ENCODE measurements at regions of chr1 and their contacts with region 1.

Region 1: GRCh38 chr1:151327223-151327902 is at the start of gene PI4KB:
- DNase-seq: peak; percentile 100
- H3K4me3 Mint-ChIP-seq: peak within 1 kb of the TSS; percentile 89
- H3K27ac Mint-ChIP-seq: peak within 1 kb of the TSS; percentile 90
- H3K4me1 Mint-ChIP-seq: peaks cover 36% of the 10 kb centered on the region
- H3K27me3 Mint-ChIP-seq: no peaks in the 10 kb centered on the region
- CTCF ChIP-seq: no peak
- total RNA-seq, gene PI4KB: 75.3 and 90.1 TPM in 2 replicates

Region 2: GRCh38 chr1:151036363-151036762 is 291.0 kb before region 1 on chr1 and contains the start of gene BNIPL:
- CTCF ChIA-PET with region 1: no interaction called
- POLR2A ChIA-PET with region 1: no interaction called
- intact Hi-C with region 1: no loop called
- DNase-seq: no peak
- H3K4me3 Mint-ChIP-seq: no peak within 1 kb of the TSS
- H3K27ac Mint-ChIP-seq: no peak within 1 kb of the TSS
- H3K4me1 Mint-ChIP-seq: peaks cover 5% of the 10 kb centered on the region
- H3K27me3 Mint-ChIP-seq: no peaks in the 10 kb centered on the region
- CTCF ChIP-seq: no peak
- total RNA-seq, gene BNIPL: 1.2 and 2.3 TPM in 2 replicates

Region 3: DNA sequence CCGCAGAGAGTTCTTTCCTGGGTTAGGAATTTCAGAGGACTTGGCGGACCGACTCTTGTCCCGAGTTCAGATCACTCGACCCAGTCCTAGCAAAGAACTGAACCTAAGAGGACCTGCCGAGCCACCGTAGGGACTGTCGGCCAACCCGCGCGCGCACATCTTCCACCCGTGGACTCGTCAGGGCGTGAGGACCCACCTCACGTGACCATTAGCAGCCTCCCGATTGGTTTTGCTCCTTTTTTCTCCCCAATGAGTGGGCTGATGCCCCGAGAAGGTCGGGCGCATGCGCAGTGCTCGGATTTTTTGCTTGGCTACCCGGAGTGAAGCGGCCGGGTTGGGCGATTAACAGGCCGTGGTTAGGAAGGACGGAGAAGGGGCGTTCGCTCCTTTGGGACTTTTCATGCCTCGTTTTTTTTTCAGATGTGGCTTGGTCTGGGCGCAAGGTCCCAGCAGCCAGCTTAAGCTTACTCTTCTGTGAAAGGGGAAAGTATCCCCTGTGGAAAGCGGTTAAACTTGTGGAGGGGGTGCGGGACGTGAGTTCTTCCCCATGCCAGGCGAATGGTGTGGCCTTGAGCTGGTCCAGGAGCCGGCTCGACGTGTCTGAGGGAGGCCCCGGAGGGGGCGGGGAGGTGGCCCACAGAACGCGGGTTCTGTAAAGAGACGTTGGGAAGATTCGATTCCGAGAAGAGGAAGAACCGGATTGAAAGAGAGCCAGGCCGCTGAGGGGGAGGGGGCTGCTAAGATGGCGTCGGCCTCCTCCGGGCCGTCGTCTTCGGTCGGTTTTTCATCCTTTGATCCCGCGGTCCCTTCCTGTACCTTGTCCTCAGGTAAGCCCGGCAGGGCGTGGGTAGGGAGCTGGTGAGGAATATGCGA is 128.9 kb before region 1 on chr1 and contains the start of gene PIP5K1A:
- CTCF ChIA-PET with region 1: interaction called, 3 read pairs
- POLR2A ChIA-PET with region 1: interaction called, 27 read pairs
- intact Hi-C with region 1: loop called (anchors 5 kb)
- DNase-seq: peak; percentile 100
- H3K4me3 Mint-ChIP-seq: peak within 1 kb of the TSS; percentile 93
- H3K27ac Mint-ChIP-seq: peak within 1 kb of the TSS; percentile 95
- H3K4me1 Mint-ChIP-seq: peaks cover 40% of the 10 kb centered on the region
- H3K27me3 Mint-ChIP-seq: no peaks in the 10 kb centered on the region
- CTCF ChIP-seq: no peak
- total RNA-seq, gene PIP5K1A: 150 and 163 TPM in 2 replicates

Region 4: GRCh38 chr1:151311589-151312331 is 15.6 kb before region 1 on chr1:
- CTCF ChIA-PET with region 1: interaction called, 11 read pairs
- POLR2A ChIA-PET with region 1: interaction called, 253 read pairs
- intact Hi-C with region 1: loop called (anchors 1 kb)
- DNase-seq: peak; percentile 100
- H3K4me3 Mint-ChIP-seq: no peak overlapping the region
- H3K27ac Mint-ChIP-seq: peak overlapping the region; percentile 95
- H3K4me1 Mint-ChIP-seq: peaks cover 40% of the 10 kb centered on the region
- H3K27me3 Mint-ChIP-seq: no peaks in the 10 kb centered on the region
- CTCF ChIP-seq: no peak

Region 5: DNA sequence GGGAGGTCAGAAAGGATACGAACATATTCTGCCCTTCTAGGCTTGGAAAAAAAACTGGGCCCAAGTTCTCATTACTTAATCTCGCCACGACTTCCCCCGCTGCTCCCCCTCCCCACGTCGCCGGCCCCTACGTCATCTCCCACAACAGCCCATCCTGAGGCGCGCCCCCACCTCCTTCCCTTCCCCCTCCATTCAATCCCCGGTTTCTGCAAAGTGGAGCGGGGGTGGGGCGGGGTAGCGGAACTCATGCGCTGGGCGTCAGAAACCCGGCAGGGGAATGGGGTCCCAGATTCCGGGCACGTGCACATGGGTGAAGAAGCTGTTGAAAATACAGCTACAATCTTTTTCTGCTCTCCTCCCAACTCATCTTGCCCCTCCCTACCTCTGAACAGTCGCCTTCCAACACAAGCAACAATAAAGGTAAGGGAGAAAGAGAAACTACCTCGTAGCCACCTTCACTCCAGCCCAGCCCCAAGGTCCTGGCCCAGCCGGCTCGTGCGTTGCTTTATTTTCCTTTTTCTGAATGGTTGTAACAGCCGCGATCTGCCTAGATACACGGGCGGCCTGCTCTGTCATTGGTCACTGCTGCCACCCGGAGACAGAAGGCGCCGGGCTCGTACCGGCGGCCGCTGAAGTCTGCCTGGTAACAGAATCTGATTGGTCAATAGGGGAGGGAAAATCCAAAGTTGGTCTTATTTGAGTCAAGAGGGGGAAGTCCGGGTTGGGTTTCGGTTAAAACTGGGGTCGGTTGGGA is 19.6 kb after region 1 on chr1 and contains the start of gene RFX5:
- CTCF ChIA-PET with region 1: interaction called, 214 read pairs
- POLR2A ChIA-PET with region 1: interaction called, 19 read pairs
- intact Hi-C with region 1: no loop called
- DNase-seq: peak; percentile 99
- H3K4me3 Mint-ChIP-seq: peak within 1 kb of the TSS; percentile 94
- H3K27ac Mint-ChIP-seq: peak within 1 kb of the TSS; percentile 97
- H3K4me1 Mint-ChIP-seq: peaks cover 28% of the 10 kb centered on the region
- H3K27me3 Mint-ChIP-seq: no peaks in the 10 kb centered on the region
- CTCF ChIP-seq: no peak
- total RNA-seq, gene RFX5: 19.2 and 26.5 TPM in 2 replicates

Region 6: DNA sequence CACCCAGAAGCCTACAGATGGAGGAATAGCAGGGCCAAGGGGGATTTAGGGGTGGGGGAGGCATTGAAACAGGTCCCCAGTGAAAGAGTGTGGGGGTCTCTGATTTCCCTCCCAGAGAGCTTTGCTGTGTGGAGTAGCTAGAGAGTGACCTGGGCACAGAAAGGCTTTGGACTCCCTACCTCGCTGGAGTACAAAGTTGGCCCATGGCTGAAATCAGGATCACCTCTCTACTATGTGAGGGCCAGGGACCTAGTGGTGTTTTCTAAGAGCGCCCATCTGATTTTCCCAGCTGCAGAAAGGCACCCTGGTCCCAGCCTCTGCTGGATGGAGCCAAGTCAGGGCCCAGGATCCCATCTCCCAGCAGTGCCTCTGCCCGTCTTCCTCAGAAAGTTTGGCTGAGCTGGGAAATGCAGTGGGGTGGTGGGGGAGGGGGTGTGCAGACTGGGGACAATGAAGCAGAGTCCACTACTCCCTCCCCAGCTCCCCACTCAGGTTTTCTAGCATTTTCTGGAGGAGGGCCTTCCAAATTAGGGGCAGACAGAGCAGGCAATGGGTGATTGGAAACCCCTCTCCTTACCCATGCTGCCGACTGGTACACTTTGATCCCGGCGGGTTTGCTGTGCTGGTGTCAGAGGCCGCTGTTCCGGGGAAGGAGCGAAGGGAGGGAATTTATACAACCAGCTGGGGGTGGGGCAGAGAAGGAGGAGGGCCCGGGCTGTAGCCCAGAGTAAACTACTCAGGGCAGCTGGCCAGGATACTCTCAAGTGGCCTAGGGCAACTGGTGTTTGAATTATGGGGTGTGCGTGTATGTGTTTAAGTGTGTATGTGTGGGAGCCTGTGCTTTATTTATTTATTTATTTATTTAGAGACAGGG is 44.9 kb after region 1 on chr1 and contains the start of gene SELENBP1:
- CTCF ChIA-PET with region 1: interaction called, 4 read pairs
- POLR2A ChIA-PET with region 1: interaction called, 43 read pairs
- intact Hi-C with region 1: no loop called
- DNase-seq: peak; percentile 94
- H3K4me3 Mint-ChIP-seq: peak within 1 kb of the TSS; percentile 69
- H3K27ac Mint-ChIP-seq: peak within 1 kb of the TSS; percentile 13
- H3K4me1 Mint-ChIP-seq: peaks cover 25% of the 10 kb centered on the region
- H3K27me3 Mint-ChIP-seq: peaks cover 7% of the 10 kb centered on the region
- CTCF ChIP-seq: no peak
- total RNA-seq, gene SELENBP1: 8.2 and 11.6 TPM in 2 replicates

Measured in MCF 10A (cell line).